HEK293T (cell line): ENCODE measurements at regions of chr12 and their contacts with region 1.

Region 1: DNA sequence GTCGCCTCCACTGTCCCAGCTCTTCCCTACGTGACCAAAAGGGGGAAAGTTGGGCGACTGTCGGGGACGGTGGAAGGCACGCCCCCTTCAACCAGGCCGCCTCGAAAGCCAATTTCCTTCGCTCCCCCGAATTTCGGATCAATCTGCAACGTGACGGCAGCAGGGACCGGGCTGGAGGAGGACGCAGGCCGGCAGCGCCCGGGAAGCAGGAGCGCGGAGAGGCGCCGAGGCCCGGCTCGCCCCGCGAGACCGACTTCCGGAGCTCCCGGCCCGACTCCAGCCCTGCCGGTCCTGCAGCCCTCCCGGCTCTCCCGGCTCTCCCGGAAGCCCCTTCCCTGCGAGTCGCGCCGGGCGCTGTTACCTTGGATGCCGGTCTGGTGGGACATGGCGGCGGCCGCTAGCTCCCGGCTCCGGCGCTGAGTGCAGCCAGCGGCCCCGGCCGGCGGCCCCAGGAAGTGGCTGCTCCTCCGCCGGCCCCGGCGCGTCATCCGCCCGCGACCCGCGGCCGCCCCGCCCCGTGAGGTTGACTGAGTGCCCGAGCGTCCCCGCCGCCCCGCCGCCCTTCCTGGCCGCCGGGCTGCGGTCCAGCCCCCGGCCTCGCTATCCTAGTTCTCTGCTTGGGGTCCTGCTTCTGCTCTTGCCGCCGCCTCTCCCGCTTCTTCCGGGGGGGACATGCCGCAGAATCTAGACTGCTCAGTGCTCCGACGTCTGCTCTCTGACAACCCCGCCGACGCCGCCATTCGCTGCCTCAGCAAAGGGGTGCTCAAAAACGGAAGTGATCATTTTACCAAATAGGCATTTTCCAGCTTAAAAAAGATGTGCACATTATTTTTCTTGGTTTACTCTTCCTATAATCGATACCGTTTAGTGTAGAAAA is at the start of gene TWF1:
- DNase-seq: peak; percentile 89

Region 2: GRCh38 chr12:43816168-43816567 is 10.1 kb after region 1 on chr12:
- CTCF ChIA-PET with region 1: no interaction called
- POLR2A ChIA-PET with region 1: interaction called, 23 read pairs
- DNase-seq: no peak

Region 3: DNA sequence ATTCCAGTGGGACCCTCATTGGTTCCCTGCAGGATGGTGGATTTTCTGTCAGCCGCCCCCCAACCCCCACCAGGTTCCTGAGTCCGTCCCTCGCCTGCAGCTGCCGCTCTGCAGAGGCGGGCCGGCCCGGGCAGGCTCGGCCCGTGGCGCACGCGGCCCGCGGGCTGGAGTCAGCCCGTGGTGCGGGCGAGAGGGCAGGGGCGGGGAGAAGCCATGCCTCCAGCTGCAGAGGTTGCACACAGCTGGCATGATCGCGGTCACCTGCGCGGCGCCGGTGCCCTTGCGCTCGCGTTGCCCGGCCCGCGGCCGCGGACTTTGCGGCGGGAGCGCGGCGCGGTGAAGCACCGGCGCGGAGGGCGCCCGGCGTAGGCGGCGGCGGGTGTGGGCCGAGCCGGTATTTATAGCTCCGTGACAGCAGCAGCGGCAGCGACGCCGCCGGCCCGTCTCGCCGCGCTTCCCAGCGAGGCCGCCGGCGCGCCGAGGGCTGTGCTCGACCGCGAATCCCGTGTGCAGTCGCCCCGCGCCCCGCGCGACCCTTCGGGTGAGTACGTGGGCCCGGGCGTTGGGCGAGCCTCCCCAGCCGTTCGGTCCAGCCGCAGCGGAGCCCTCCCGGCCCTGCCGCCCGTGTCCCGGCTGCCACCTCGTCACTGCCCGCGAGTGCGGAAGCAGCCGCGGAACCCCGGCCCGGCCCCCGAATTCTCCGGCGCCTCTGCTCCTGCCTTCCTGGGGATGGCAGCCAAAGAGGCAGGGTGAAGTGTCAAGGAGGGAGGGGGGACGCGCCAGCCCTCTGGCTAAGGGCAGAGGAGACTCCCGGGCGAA is 29.8 kb after region 1 on chr12 and contains the start of gene TMEM117:
- CTCF ChIA-PET with region 1: no interaction called
- POLR2A ChIA-PET with region 1: interaction called, 31 read pairs
- DNase-seq: peak; percentile 60